ENCODE measurements at regions of chr7 and their contacts with region 1.

Region 1: DNA sequence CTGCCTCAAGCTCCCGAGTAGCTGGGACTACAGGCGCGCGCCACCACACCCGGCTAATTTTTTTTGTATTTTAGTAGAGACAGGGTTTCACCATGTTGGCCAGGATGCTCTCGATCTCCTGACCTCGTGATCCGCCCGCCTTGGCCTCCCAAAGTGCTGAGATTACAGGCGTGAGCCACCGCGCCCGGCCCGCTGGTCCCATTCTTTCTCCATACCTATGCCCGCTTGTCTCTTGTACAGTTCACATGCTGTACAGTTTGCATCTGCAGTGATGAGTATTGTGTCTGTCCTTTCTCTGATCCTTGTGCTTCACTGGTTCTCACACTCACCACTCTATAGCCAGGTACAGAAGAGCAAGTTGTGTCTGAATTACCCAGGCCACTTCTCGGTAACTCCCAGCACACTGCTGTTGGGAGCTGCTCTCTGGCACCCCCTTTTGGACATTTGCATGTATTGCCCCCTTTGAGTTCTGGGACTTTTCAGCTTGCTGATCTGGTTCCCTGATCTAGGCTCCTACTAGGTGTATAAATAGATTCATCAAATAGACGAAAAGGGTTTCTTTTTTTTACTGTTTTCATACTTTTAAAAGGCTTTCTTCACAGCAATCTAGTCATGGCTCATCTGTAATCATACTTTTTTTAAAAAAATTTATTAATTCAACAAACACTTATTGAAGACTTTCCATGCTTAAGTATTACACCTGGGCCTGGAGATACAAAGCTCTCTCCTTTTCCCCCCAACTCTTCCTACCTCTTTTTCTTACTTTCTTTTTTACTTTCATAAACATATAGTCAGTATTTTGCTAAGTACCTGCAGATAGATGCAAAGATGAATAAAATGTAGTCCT is 53.5 kb downstream of the AOAH start:
- DNase-seq: peak; percentile 77
- H3K4me3 Mint-ChIP-seq: no peak overlapping the region
- H3K27ac Mint-ChIP-seq: no peak overlapping the region
- H3K4me1 Mint-ChIP-seq: peaks cover 18% of the 10 kb centered on the region
- H3K27me3 Mint-ChIP-seq: peaks cover 4% of the 10 kb centered on the region

Region 2: DNA sequence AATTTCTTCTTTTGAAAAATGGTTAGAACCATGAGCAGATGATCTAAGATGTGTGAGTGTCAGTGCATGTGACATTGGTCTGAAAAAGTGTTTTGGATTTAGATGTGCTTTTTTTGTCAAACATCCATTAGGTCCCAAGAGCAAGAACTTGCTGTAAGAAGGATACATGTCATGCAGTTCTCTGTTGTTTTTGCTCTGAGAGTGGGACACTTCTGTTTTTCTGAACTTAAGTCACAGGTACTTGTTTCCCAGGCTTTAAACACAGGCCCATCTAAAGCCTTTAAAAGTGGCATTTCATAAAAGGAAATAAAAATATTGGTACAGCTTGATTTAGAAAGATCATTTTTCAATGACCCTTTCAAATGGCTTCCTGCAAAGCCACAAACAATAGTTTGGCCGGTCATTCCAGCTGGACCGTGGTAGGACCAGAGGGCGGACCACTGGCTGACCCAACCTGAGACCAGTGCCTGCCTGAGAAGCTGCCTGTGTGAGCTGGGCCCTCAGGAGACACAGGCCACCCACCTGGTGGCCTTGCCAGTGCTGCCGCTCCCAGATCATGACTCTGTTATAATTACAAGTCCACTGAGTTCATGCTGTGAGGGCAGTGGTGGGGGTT is 425.0 kb before region 1 on chr7:
- CTCF ChIA-PET with region 1: no interaction called
- DNase-seq: no peak
- H3K4me3 Mint-ChIP-seq: no peak overlapping the region
- H3K27ac Mint-ChIP-seq: no peak overlapping the region
- H3K4me1 Mint-ChIP-seq: no peaks in the 10 kb centered on the region
- H3K27me3 Mint-ChIP-seq: no peaks in the 10 kb centered on the region

Region 3: GRCh38 chr7:36473454-36474282 is 197.1 kb before region 1 on chr7:
- CTCF ChIA-PET with region 1: interaction called, 22 read pairs
- DNase-seq: peak; percentile 52
- H3K4me3 Mint-ChIP-seq: no peak overlapping the region
- H3K27ac Mint-ChIP-seq: no peak overlapping the region
- H3K4me1 Mint-ChIP-seq: peaks cover 11% of the 10 kb centered on the region
- H3K27me3 Mint-ChIP-seq: no peaks in the 10 kb centered on the region

Region 4: GRCh38 chr7:36487756-36488336 is 183.0 kb before region 1 on chr7:
- CTCF ChIA-PET with region 1: interaction called, 80 read pairs
- DNase-seq: peak; percentile 58
- H3K4me3 Mint-ChIP-seq: no peak overlapping the region
- H3K27ac Mint-ChIP-seq: no peak overlapping the region
- H3K4me1 Mint-ChIP-seq: no peaks in the 10 kb centered on the region
- H3K27me3 Mint-ChIP-seq: peaks cover 6% of the 10 kb centered on the region